ENCODE measurements at regions of chr3 and their contacts with region 1.

Region 1: GRCh38 chr3:64514889-64515288 is 172.9 kb downstream of the ADAMTS9 start:
- DNase-seq: no peak
- ATAC-seq: no peak
- H3K4me3 ChIP-seq: no peak overlapping the region
- H3K27ac ChIP-seq: no peak overlapping the region
- H3K4me1 ChIP-seq: no peaks in the 10 kb centered on the region
- H3K27me3 ChIP-seq: no peaks in the 10 kb centered on the region
- CTCF ChIP-seq: no peak

Region 2: GRCh38 chr3:65749066-65749465 is 1234.2 kb after region 1 on chr3:
- intact Hi-C with region 1: loop called in 1 of 2 experiments (anchors 5 kb)
- DNase-seq: no peak
- ATAC-seq: no peak
- H3K4me3 ChIP-seq: no peak overlapping the region
- H3K27ac ChIP-seq: no peak overlapping the region
- H3K4me1 ChIP-seq: no peaks in the 10 kb centered on the region
- H3K27me3 ChIP-seq: no peaks in the 10 kb centered on the region
- CTCF ChIP-seq: no peak

Measured in psoas muscle (tissue), 8 donors.